CD4-positive, alpha-beta T cell (primary cell): ENCODE measurements at regions of chr14 and their contacts with region 1.

Region 1: DNA sequence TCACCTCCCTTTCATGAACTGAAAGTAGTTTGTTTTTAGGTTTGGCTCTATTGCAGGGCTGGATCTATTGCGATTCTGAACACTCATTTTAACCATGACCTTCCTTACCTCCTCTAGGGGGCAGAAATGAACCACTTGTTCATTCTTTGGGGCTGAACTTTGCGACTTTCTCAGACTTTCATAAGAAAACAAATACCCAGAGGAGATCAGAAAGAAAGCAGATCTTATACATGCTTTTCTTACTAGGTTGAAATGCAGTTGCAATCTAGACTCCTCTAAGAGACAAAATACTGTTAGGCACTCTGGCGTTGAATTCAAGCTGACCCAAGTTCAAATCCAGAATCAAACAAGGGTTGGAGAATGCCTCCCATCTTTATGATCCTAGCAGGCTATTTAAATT is 32.6 kb upstream of the PLEKHG3 start:
- DNase-seq: peak in 4 of 14 experiments; percentile 13 to 79 (median 77)
- ATAC-seq: peak; percentile 62
- H3K4me3 ChIP-seq: no peak overlapping the region
- H3K4me3 Mint-ChIP-seq: no peak overlapping the region
- H3K27ac ChIP-seq: no peak overlapping the region
- H3K27ac Mint-ChIP-seq: no peak overlapping the region
- H3K4me1 ChIP-seq: peaks cover 44% of the 10 kb centered on the region
- H3K4me1 Mint-ChIP-seq: peaks cover 28% of the 10 kb centered on the region
- H3K27me3 ChIP-seq: no peaks in the 10 kb centered on the region
- H3K27me3 Mint-ChIP-seq: no peaks in the 10 kb centered on the region
- CTCF ChIP-seq: peak; percentile 65

Region 2: GRCh38 chr14:64421166-64421565 is 250.4 kb before region 1 on chr14:
- CTCF ChIA-PET with region 1: no interaction called
- POLR2A ChIA-PET with region 1: no interaction called
- intact Hi-C with region 1: no loop called
- DNase-seq: no peak
- ATAC-seq: no peak
- H3K4me3 ChIP-seq: no peak overlapping the region
- H3K4me3 Mint-ChIP-seq: no peak overlapping the region
- H3K27ac ChIP-seq: no peak overlapping the region
- H3K27ac Mint-ChIP-seq: no peak overlapping the region
- H3K4me1 ChIP-seq: no peaks in the 10 kb centered on the region
- H3K4me1 Mint-ChIP-seq: no peaks in the 10 kb centered on the region
- H3K27me3 ChIP-seq: no peaks in the 10 kb centered on the region
- H3K27me3 Mint-ChIP-seq: no peaks in the 10 kb centered on the region
- CTCF ChIP-seq: no peak

Region 3: GRCh38 chr14:64654246-64654900 is 17.2 kb before region 1 on chr14:
- CTCF ChIA-PET with region 1: no interaction called
- POLR2A ChIA-PET with region 1: no interaction called
- intact Hi-C with region 1: no loop called
- DNase-seq: peak in 2 of 14 experiments; percentile 57 to 68
- ATAC-seq: no peak
- H3K4me3 ChIP-seq: no peak overlapping the region
- H3K4me3 Mint-ChIP-seq: no peak overlapping the region
- H3K27ac ChIP-seq: no peak overlapping the region
- H3K27ac Mint-ChIP-seq: no peak overlapping the region
- H3K4me1 ChIP-seq: peaks cover 6% of the 10 kb centered on the region
- H3K4me1 Mint-ChIP-seq: peaks cover 6% of the 10 kb centered on the region
- H3K27me3 ChIP-seq: peaks cover 1 to 5% of the 10 kb centered on the region in 2 experiments
- H3K27me3 Mint-ChIP-seq: peaks cover 22% of the 10 kb centered on the region
- CTCF ChIP-seq: no peak

Region 4: GRCh38 chr14:64704143-64704742 is 32.7 kb after region 1 on chr14 and contains the start of gene PLEKHG3:
- CTCF ChIA-PET with region 1: no interaction called
- POLR2A ChIA-PET with region 1: no interaction called
- intact Hi-C with region 1: no loop called
- DNase-seq: peak in 5 of 14 experiments; percentile 32 to 66 (median 46)
- ATAC-seq: peak; percentile 42
- H3K4me3 ChIP-seq: peak within 1 kb of the TSS; percentile 66
- H3K4me3 Mint-ChIP-seq: peak within 1 kb of the TSS; percentile 87
- H3K27ac ChIP-seq: peak within 1 kb of the TSS; percentile 53 to 63
- H3K27ac Mint-ChIP-seq: peak within 1 kb of the TSS; percentile 72
- H3K4me1 ChIP-seq: peaks cover 69% of the 10 kb centered on the region
- H3K4me1 Mint-ChIP-seq: peaks cover 50% of the 10 kb centered on the region
- H3K27me3 ChIP-seq: peaks cover 5 to 35% of the 10 kb centered on the region in 2 experiments
- H3K27me3 Mint-ChIP-seq: peaks cover 51% of the 10 kb centered on the region
- CTCF ChIP-seq: no peak
- total RNA-seq, gene PLEKHG3: 12.1 to 13.3 TPM

Region 5: GRCh38 chr14:64764641-64765520 is 93.3 kb after region 1 on chr14:
- CTCF ChIA-PET with region 1: interaction called, 11 read pairs
- POLR2A ChIA-PET with region 1: interaction called, 3 read pairs
- intact Hi-C with region 1: loop called (anchors 1 kb)
- DNase-seq: peak; percentile 44 to 86 (median 58)
- ATAC-seq: peak; percentile 76
- H3K4me3 ChIP-seq: peak overlapping the region; percentile 33
- H3K4me3 Mint-ChIP-seq: peak overlapping the region; percentile 67
- H3K27ac ChIP-seq: no peak overlapping the region
- H3K27ac Mint-ChIP-seq: no peak overlapping the region
- H3K4me1 ChIP-seq: peaks cover 61% of the 10 kb centered on the region
- H3K4me1 Mint-ChIP-seq: peaks cover 32% of the 10 kb centered on the region
- H3K27me3 ChIP-seq: no peaks in the 10 kb centered on the region
- H3K27me3 Mint-ChIP-seq: no peaks in the 10 kb centered on the region
- CTCF ChIP-seq: peak; percentile 85